K562 (cell line): ENCODE measurements at regions of chr9 and their contacts with region 1.

Region 1: DNA sequence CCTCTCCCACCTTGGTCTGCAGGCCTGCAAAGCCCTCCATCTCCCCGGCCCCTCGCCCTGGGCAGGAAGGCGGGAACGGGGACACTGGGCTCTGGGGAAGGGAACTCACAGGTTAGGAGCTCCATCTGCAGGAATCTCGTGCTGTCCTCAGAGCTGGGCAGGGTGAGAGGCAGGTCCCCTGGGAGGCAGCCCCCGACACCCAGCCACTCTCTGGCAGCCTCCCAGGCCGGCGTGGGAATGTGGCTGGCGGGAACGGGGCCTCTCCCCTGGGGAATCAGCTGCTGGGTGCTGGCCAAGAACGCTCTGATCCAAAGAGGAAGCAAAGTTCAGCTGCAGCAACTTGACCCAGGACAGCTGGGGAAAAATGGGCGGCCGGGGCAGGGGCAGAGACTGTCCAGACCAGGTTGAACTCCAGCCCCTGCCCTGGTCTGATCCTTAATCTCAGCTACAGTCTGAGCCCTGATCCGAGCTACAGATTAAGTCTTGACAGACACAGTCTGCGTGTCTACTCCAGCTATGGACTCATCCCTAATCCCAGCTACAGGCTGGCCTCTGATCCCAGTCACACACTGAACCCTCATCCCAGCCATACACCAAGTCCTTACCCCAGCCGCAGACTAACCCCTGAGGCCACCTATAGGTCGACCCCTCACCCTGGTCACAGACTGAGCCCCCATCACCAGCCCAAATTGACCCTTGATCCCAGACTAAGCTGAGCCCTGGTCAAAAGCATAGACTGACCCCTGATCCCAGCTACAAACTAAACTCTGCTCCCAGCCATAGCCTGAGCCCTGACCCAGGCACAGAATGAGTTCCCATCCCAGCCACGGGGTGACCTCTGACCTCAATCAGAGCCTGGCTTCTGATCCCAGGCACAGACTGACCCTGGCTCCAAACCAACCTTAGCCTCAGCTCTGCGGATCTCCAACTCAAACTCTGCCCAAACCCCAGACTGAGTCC is 37.3 kb upstream of the EGFL7 start:
- DNase-seq: peak in 3 of 4 experiments; percentile 47 to 67 (median 51)
- ATAC-seq: peak; percentile 72
- H3K4me3 ChIP-seq: no peak overlapping the region
- H3K27ac ChIP-seq: no peak overlapping the region
- H3K4me1 ChIP-seq: peaks cover 0 to 92% of the 10 kb centered on the region in 2 experiments; a peak in 4 of 5 replicates
- H3K27me3 ChIP-seq: peaks cover 0 to 12% of the 10 kb centered on the region in 2 experiments; a peak in 1 of 5 replicates
- CTCF ChIP-seq: peak; percentile 51 to 67 (median 61); a peak in 5 of 6 replicates
- EP300 ChIP-seq: no peak
- POLR2A ChIP-seq: no peak
- RAD21 ChIP-seq: peak; percentile 73 to 88

Region 2: GRCh38 chr9:136109351-136110081 is 515.9 kb before region 1 on chr9:
- CTCF ChIA-PET with region 1: no interaction called
- POLR2A ChIA-PET with region 1: no interaction called
- in situ Hi-C with region 1: no loop called
- intact Hi-C with region 1: no loop called
- DNase-seq: peak; percentile 76 to 87 (median 82)
- ATAC-seq: peak; percentile 82
- H3K4me3 ChIP-seq: peak overlapping the region; percentile 36
- H3K27ac ChIP-seq: peak overlapping the region; percentile 79
- H3K4me1 ChIP-seq: peaks cover 48 to 80% of the 10 kb centered on the region in 2 experiments
- H3K27me3 ChIP-seq: no peaks in the 10 kb centered on the region
- CTCF ChIP-seq: no peak
- EP300 ChIP-seq: no peak
- POLR2A ChIP-seq: peak; percentile 66
- RAD21 ChIP-seq: no peak

Region 3: GRCh38 chr9:136488247-136489214 is 136.8 kb before region 1 on chr9:
- CTCF ChIA-PET with region 1: interaction called, 154 read pairs
- POLR2A ChIA-PET with region 1: interaction called, 5 read pairs
- in situ Hi-C with region 1: loop called (anchors 5 kb)
- intact Hi-C with region 1: no loop called
- DNase-seq: peak; percentile 59 to 74 (median 67)
- ATAC-seq: peak; percentile 78
- H3K4me3 ChIP-seq: no peak overlapping the region
- H3K27ac ChIP-seq: no peak overlapping the region
- H3K4me1 ChIP-seq: peaks cover 8 to 35% of the 10 kb centered on the region in 2 experiments
- H3K27me3 ChIP-seq: peaks cover 0 to 31% of the 10 kb centered on the region in 2 experiments; a peak in 3 of 5 replicates
- CTCF ChIP-seq: peak; percentile 95 to 96 (median 95)
- EP300 ChIP-seq: no peak
- POLR2A ChIP-seq: no peak
- RAD21 ChIP-seq: peak; percentile 96 to 99